ENCODE measurements at regions of chr6 and their contacts with region 1.

Region 1: DNA sequence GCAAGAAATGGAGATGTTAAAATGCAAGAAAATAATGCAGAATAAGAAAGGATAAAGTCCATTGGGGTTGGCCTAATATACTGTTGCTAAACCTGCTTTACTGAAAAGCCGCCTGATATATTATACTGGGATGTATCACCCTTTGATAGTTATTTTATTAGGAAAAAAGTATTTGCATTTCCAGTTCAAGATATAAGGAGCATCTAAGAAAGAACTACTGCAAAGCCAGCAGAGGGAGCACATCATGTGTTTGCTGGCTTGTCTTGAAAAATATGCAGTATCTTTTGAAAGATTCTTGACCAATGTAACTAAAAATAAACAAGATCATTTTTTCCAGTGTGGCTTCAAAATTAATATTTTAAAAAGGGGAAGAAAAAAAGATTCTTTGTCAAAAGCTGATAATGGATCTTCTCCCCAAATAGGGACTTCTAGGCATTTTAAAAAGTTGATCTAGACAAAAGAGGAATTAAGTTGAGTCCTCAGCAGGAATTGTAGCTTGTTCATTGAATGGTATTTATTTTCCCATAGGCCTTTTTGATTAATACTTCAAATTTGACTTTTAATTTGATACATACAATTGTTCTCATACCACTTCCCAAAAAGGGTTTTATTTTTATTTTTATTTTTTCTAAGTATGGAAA is 214.9 kb downstream of the ZFAND3 start:
- DNase-seq: peak in 1 of 10 donors; percentile 20

Region 2: GRCh38 chr6:38283734-38284362 is 249.5 kb after region 1 on chr6:
- intact Hi-C with region 1: loop called (anchors 10 kb)
- DNase-seq: no peak